CD4-positive, alpha-beta T cell (primary cell): ENCODE measurements at regions of chr14 and their contacts with region 1.

Region 1: DNA sequence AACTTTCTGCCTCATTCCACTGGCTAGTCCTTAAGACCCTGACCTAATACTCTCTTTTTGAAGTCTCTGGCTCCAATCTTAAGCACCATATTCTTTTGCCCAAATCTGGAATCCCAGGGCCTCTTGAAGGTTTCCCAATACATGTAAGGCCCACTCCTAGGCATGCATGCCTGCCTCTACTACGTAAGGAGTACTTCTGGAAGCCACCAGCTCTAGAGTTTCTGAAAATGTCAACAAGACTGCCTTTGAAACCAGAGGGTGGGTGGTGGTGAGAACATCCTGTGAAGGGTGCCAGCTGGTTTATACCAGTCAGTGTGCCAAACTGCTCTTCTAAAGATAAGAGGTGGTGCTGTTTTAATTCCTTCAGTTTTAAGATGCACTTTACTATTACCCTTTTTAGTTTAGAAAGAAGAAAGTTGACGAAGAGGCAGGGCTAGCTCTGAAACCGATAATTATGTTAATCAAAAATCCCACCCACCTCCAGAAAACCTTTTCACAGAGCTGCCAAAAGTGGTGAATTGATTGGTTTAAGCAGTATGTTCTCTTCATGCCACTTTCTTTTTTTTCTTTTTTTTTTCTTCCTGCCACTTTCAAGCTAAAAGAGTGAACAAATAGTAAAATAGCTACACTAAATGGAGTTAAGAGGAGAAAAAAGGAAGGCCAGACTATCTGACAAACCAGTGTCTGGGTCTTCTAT is 8.7 kb upstream of the WDR89 start:
- DNase-seq: peak; percentile 35 to 92 (median 56)
- ATAC-seq: peak; percentile 97
- H3K4me3 ChIP-seq: no peak overlapping the region
- H3K4me3 Mint-ChIP-seq: peak overlapping the region; percentile 85
- H3K27ac ChIP-seq: peak overlapping the region; percentile 80 to 88
- H3K27ac Mint-ChIP-seq: peak overlapping the region; percentile 100
- H3K4me1 ChIP-seq: peaks cover 42% of the 10 kb centered on the region
- H3K4me1 Mint-ChIP-seq: peaks cover 50% of the 10 kb centered on the region
- H3K27me3 ChIP-seq: no peaks in the 10 kb centered on the region
- H3K27me3 Mint-ChIP-seq: no peaks in the 10 kb centered on the region
- CTCF ChIP-seq: no peak

Region 2: GRCh38 chr14:63632932-63633514 is 17.4 kb before region 1 on chr14:
- CTCF ChIA-PET with region 1: interaction called, 3 read pairs
- POLR2A ChIA-PET with region 1: interaction called, 22 read pairs
- intact Hi-C with region 1: no loop called
- DNase-seq: peak in 3 of 14 experiments; percentile 64 to 71 (median 66)
- ATAC-seq: peak; percentile 96
- H3K4me3 ChIP-seq: no peak overlapping the region
- H3K4me3 Mint-ChIP-seq: no peak overlapping the region
- H3K27ac ChIP-seq: no peak overlapping the region
- H3K27ac Mint-ChIP-seq: peak overlapping the region; percentile 11
- H3K4me1 ChIP-seq: peaks cover 2% of the 10 kb centered on the region
- H3K4me1 Mint-ChIP-seq: peaks cover 57% of the 10 kb centered on the region
- H3K27me3 ChIP-seq: no peaks in the 10 kb centered on the region
- H3K27me3 Mint-ChIP-seq: no peaks in the 10 kb centered on the region
- CTCF ChIP-seq: peak; percentile 88

Region 3: DNA sequence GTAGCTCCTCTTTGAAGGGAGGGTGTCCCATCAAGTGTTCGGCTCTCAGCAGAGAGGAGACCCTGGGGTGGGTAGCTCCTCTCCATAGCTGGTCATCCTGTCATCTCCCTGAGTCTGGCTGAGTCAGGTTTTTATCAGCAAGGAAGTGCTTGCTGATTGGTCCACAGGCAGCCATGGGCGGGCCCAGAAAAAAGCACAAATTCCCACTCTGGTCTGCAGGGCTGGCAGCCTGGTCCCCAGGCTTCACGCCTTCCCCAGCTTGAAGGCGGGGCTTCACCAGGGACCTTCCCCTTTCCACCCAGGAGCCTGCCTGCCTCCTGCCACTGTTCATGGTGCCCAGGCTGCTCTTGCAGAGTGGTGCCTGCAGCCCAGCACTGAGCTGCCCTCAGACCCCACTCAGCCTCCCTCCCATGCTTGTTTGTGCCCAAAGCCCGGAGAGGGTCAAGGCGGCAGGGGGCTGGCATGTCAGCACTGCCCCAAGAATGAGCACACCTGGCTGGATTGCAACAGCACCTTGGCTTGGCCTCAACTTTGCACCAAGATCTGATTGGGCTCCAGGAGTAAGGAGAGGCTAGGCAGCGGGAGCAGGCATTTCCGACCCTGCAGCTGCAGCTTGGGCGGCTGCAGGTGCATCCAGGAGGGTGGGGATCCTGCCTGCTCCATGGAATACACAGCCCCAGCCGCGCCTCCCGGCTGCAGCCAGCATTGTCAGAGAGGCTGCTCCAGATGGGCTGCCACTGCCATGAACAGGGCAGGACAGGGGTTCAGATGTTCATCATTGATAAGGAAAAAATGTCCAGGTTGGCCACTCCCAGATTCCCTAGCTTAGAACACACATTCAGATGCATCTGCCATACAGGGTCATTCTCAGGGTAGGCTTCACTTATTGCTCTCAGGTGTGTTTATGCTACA is 13.3 kb after region 1 on chr14:
- CTCF ChIA-PET with region 1: no interaction called
- POLR2A ChIA-PET with region 1: interaction called, 10 read pairs
- intact Hi-C with region 1: no loop called
- DNase-seq: no peak
- ATAC-seq: no peak
- H3K4me3 ChIP-seq: no peak overlapping the region
- H3K4me3 Mint-ChIP-seq: no peak overlapping the region
- H3K27ac ChIP-seq: no peak overlapping the region
- H3K27ac Mint-ChIP-seq: no peak overlapping the region
- H3K4me1 ChIP-seq: peaks cover 4% of the 10 kb centered on the region
- H3K4me1 Mint-ChIP-seq: peaks cover 5% of the 10 kb centered on the region
- H3K27me3 ChIP-seq: no peaks in the 10 kb centered on the region
- H3K27me3 Mint-ChIP-seq: no peaks in the 10 kb centered on the region
- CTCF ChIP-seq: no peak

Region 4: GRCh38 chr14:63686951-63687350 is 36.5 kb after region 1 on chr14:
- CTCF ChIA-PET with region 1: interaction called, 3 read pairs
- POLR2A ChIA-PET with region 1: interaction called, 4 read pairs
- intact Hi-C with region 1: loop called in 1 of 2 experiments (anchors 5 kb)
- DNase-seq: no peak
- ATAC-seq: no peak
- H3K4me3 ChIP-seq: no peak overlapping the region
- H3K4me3 Mint-ChIP-seq: no peak overlapping the region
- H3K27ac ChIP-seq: no peak overlapping the region
- H3K27ac Mint-ChIP-seq: no peak overlapping the region
- H3K4me1 ChIP-seq: no peaks in the 10 kb centered on the region
- H3K4me1 Mint-ChIP-seq: peaks cover 6% of the 10 kb centered on the region
- H3K27me3 ChIP-seq: no peaks in the 10 kb centered on the region
- H3K27me3 Mint-ChIP-seq: no peaks in the 10 kb centered on the region
- CTCF ChIP-seq: no peak